Activated naive CD4-positive, alpha-beta T cell treated with anti-CD3 and anti-CD28 coated beads for 36 hours (primary cell): ENCODE measurements at regions of chr7 and their contacts with region 1.

Region 1: DNA sequence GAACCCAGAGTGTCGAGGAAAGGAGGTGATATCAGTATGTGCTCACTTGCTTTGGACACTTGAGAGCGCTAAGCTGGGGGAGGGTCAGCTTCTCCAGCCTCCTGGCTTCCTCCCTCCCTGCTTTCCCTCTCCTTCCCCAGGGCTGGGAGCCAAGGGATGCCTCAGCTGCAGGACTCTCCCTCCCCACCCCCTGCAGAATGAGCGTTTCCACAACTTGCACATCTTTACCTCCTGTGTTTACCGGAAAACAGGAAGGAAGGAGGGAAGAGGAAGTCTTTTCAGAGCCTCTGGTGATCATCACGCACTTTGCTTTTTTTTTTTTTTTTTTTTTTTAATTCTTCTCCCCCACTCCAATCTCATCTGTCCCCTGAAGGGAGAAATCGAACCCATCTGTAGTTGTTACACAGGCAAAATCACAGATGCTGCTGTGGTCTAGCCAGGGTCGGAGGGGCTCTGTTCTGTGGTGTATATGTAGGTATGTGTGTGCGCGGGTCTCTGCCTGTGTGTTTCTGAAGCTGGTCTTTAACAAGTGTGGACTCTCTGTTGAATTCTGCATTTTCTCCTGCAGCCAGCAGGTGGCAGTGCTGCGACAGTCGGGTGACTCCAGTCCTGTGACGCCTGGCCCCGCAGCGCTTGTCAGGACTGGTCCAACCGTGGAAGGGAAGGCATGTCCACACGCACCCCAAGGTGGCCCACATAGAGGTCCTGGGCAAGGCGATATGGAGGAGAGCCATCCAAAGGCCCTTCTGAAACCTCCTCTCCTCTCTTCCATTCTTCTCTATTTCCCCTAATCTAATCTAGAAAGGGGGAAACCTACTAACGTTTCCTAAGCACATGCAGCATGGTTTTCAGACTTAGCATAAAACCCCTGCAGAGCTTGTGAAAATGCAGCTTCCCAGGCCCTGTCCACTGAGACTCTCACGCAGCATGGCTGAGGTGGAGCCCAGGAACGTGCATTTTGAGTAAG is 257.6 kb downstream of the PLXNA4 start:
- DNase-seq: peak; percentile 83
- H3K4me3 Mint-ChIP-seq: no peak overlapping the region
- H3K27ac Mint-ChIP-seq: no peak overlapping the region
- H3K4me1 Mint-ChIP-seq: peaks cover 10% of the 10 kb centered on the region
- H3K27me3 Mint-ChIP-seq: peaks cover 39% of the 10 kb centered on the region

Region 2: GRCh38 chr7:132394283-132395198 is 75.9 kb after region 1 on chr7:
- CTCF ChIA-PET with region 1: interaction called, 4 read pairs
- intact Hi-C with region 1: loop called (anchors 5 kb)
- DNase-seq: peak; percentile 43
- H3K4me3 Mint-ChIP-seq: no peak overlapping the region
- H3K27ac Mint-ChIP-seq: no peak overlapping the region
- H3K4me1 Mint-ChIP-seq: peaks cover 5% of the 10 kb centered on the region
- H3K27me3 Mint-ChIP-seq: peaks cover 2% of the 10 kb centered on the region

Region 3: GRCh38 chr7:132603220-132603833 is 284.7 kb after region 1 on chr7:
- CTCF ChIA-PET with region 1: no interaction called
- intact Hi-C with region 1: no loop called
- DNase-seq: no peak
- H3K4me3 Mint-ChIP-seq: no peak overlapping the region
- H3K27ac Mint-ChIP-seq: no peak overlapping the region
- H3K4me1 Mint-ChIP-seq: no peaks in the 10 kb centered on the region
- H3K27me3 Mint-ChIP-seq: peaks cover 6% of the 10 kb centered on the region

Region 4: GRCh38 chr7:133310232-133310862 is 991.7 kb after region 1 on chr7:
- CTCF ChIA-PET with region 1: no interaction called
- intact Hi-C with region 1: no loop called
- DNase-seq: no peak
- H3K4me3 Mint-ChIP-seq: no peak overlapping the region
- H3K27ac Mint-ChIP-seq: no peak overlapping the region
- H3K4me1 Mint-ChIP-seq: peaks cover 5% of the 10 kb centered on the region
- H3K27me3 Mint-ChIP-seq: no peaks in the 10 kb centered on the region

Region 5: DNA sequence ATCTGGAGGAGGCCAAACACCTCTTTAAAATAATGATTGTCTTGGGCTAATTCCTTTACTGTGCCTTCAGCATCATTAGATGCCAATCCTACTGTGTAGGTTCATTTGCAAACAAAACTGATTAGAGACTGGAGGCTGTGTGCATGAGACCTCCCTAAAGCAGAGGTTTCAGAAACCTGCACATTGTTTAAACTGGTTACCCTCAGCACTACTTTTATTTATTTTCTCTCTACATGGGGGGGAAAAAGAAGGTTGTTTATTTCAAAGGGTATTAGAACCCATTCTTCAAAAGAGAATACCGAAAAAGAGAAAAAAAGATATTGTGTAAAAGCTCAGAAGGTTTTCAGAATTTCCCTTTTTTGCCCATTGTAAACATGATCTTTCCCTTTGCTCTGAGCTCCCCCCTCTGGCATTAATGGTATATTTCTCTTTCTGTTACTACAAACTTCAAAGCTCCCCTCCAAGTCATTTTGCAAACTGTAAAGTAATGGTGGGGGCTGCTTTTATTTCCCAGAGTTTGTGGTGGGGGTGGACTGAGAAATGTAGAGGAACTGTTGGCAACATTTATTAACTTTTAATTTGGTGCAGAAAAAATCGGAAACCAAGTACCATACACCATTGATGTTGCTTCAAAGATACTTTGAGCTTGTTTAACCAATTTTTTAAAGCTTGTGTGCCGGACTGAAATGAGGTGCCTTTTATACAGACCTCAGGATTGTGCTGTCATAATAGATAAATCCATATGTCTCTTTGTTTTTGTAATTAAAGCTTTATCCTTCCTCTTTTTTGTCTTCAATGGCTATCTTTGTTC is 1115.6 kb after region 1 on chr7:
- CTCF ChIA-PET with region 1: no interaction called
- intact Hi-C with region 1: loop called (anchors 2 kb)
- DNase-seq: peak; percentile 8
- H3K4me3 Mint-ChIP-seq: no peak overlapping the region
- H3K27ac Mint-ChIP-seq: no peak overlapping the region
- H3K4me1 Mint-ChIP-seq: peaks cover 2% of the 10 kb centered on the region
- H3K27me3 Mint-ChIP-seq: no peaks in the 10 kb centered on the region

Region 6: GRCh38 chr7:134140889-134141867 is 1822.5 kb after region 1 on chr7:
- CTCF ChIA-PET with region 1: no interaction called
- intact Hi-C with region 1: loop called (anchors 2 kb)
- DNase-seq: peak; percentile 72
- H3K4me3 Mint-ChIP-seq: peak overlapping the region; percentile 4
- H3K27ac Mint-ChIP-seq: no peak overlapping the region
- H3K4me1 Mint-ChIP-seq: peaks cover 5% of the 10 kb centered on the region
- H3K27me3 Mint-ChIP-seq: no peaks in the 10 kb centered on the region